ENCODE measurements at regions of chr12 and their contacts with region 1.

Region 1: DNA sequence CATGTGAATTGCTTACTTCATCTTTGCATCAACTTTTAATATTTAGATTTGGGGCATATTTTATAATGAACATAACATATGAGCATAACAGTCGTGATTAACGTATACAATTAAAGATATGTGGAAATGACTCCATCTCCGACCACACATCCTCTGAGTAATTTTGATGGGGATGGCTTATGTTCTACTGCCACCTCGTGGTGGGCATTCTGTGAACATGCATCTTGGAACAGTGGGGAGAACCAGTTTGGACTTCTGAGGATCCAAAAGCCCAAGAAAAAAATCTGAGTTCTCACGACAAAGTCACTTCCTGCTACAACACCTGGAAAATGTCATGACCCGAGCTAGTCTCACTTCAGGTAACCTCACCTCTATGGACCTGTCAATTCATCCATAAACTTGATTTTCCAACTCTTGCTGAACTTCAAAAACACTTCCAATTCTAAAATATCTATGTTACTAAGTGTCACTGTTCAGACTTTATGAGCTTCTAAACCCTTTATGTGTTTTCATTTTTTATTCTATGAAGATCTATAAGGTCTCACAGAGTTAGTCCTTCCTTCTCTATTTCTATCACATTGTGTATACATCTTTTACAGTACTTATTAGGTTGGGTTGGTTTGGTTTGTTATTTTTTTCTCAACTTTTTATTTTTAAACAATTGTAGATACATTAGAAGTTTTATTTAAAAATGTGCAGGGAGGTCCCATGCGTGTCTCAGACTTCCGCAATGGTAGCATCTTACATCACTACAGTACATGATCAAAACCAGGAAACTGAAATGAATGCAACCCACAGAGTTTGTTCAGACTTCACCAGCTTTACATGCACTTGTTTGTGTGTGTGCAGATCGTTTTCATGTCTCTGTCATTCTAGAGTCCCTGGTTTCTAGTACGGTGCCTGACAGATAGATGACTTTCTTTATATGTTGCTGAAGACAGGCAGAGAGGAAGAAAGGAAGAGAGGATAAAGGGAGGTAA is 38.2 kb upstream of the STAB2 start:
- DNase-seq: peak; percentile 85
- ATAC-seq: peak; percentile 82
- H3K4me3 Mint-ChIP-seq: no peak overlapping the region
- H3K27ac Mint-ChIP-seq: no peak overlapping the region
- H3K4me1 Mint-ChIP-seq: peaks cover 5% of the 10 kb centered on the region
- H3K27me3 Mint-ChIP-seq: peaks cover 14% of the 10 kb centered on the region
- CTCF ChIP-seq: peak; percentile 97

Region 2: GRCh38 chr12:102883204-102883799 is 665.6 kb before region 1 on chr12:
- CTCF ChIA-PET with region 1: interaction called, 48 read pairs
- POLR2A ChIA-PET with region 1: interaction called, 3 read pairs
- intact Hi-C with region 1: loop called (anchors 2 kb)
- DNase-seq: peak; percentile 59
- ATAC-seq: peak; percentile 49
- H3K4me3 Mint-ChIP-seq: no peak overlapping the region
- H3K27ac Mint-ChIP-seq: no peak overlapping the region
- H3K4me1 Mint-ChIP-seq: no peaks in the 10 kb centered on the region
- H3K27me3 Mint-ChIP-seq: peaks cover 8% of the 10 kb centered on the region
- CTCF ChIP-seq: peak; percentile 78

Region 3: DNA sequence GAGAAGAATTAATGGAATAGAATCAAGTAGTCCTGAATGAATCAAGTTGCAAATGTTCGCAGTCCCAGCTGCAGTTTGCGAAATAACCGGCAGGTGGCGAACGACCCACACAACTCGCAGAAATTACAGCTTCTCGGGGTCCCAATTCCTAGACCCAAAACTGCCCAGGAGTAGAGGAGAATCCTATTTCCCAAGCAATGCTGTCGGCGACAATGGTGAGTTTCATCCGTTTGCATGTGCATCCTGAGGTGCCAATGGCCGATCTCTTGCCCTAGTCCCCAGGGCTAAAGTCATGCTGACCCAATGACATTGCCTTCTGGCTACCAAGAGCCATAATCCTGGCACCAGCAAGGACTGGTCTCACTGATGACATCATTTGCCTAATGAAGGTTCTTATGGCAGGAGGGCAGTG is 600.0 kb before region 1 on chr12:
- CTCF ChIA-PET with region 1: interaction called, 71 read pairs
- POLR2A ChIA-PET with region 1: no interaction called
- intact Hi-C with region 1: loop called (anchors 2 kb)
- DNase-seq: peak; percentile 74
- ATAC-seq: no peak
- H3K4me3 Mint-ChIP-seq: no peak overlapping the region
- H3K27ac Mint-ChIP-seq: no peak overlapping the region
- H3K4me1 Mint-ChIP-seq: peaks cover 9% of the 10 kb centered on the region
- H3K27me3 Mint-ChIP-seq: peaks cover 53% of the 10 kb centered on the region
- CTCF ChIP-seq: peak; percentile 96

Region 4: GRCh38 chr12:103326190-103326589 is 222.7 kb before region 1 on chr12:
- CTCF ChIA-PET with region 1: interaction called, 11 read pairs
- POLR2A ChIA-PET with region 1: no interaction called
- intact Hi-C with region 1: loop called (anchors 10 kb)
- DNase-seq: no peak
- ATAC-seq: no peak
- H3K4me3 Mint-ChIP-seq: no peak overlapping the region
- H3K27ac Mint-ChIP-seq: no peak overlapping the region
- H3K4me1 Mint-ChIP-seq: no peaks in the 10 kb centered on the region
- H3K27me3 Mint-ChIP-seq: no peaks in the 10 kb centered on the region
- CTCF ChIP-seq: peak; percentile 46

Region 5: DNA sequence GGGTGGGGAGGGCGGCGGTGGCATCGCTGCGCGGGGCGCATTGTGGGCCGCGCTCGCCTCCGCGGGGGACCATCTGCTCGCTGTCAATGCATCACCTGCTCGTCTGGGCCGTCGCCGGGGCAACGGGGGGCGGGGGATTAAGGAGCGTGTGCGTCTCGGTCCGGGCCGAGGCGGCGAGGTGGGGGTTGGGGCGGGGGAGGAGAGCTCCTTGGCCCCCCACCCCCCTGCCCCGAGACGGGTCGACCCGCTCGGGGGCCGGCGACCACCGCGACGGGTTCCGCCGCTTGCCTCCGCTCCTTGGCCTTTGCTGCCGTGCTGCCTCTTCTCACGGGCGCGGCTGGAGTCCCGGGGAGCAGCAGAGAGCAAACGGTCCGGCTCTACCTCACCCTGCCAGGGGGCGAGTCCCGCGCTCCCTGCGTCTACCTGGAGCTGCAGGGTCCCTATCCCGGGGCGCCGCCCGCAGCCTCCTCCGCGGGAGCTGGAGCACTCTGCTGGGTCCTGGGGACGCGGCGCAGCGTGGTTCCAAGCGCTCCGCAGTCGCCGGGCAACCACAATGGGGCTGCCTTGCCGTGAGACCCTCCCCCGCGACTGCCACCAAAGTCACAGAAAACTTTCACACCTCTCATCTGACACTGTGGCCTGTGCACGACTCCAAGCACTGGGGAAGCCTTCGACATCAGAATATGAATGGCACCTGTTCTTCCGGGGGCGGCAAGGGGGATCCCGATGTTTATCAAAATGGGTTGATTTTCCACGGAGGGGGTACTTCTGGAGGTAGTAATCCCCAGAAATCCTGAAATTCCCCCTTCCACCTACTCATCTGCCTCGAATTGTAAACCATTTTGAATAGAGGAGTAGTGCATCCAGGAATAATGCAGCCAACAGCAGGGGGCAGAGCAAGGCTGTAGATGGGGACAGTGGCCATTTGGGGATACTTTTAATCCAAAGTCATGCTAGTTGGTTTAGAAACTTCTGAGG is 53.1 kb before region 1 on chr12 and contains the start of gene C12orf42:
- CTCF ChIA-PET with region 1: interaction called, 81 read pairs
- POLR2A ChIA-PET with region 1: no interaction called
- intact Hi-C with region 1: loop called (anchors 2 kb)
- DNase-seq: peak; percentile 82
- ATAC-seq: peak; percentile 72
- H3K4me3 Mint-ChIP-seq: peak within 1 kb of the TSS; percentile 64
- H3K27ac Mint-ChIP-seq: peak within 1 kb of the TSS; percentile 37
- H3K4me1 Mint-ChIP-seq: peaks cover 34% of the 10 kb centered on the region
- H3K27me3 Mint-ChIP-seq: peaks cover 13% of the 10 kb centered on the region
- CTCF ChIP-seq: peak; percentile 66
- total RNA-seq, gene C12orf42: 0.49 to 1.4 TPM

Region 6: GRCh38 chr12:103503977-103504376 is 44.9 kb before region 1 on chr12:
- CTCF ChIA-PET with region 1: interaction called, 11 read pairs
- POLR2A ChIA-PET with region 1: no interaction called
- intact Hi-C with region 1: no loop called
- DNase-seq: peak; percentile 70
- ATAC-seq: no peak
- H3K4me3 Mint-ChIP-seq: no peak overlapping the region
- H3K27ac Mint-ChIP-seq: no peak overlapping the region
- H3K4me1 Mint-ChIP-seq: peaks cover 39% of the 10 kb centered on the region
- H3K27me3 Mint-ChIP-seq: peaks cover 12% of the 10 kb centered on the region
- CTCF ChIP-seq: peak; percentile 70

Region 7: GRCh38 chr12:103538397-103538796 is 10.5 kb before region 1 on chr12:
- CTCF ChIA-PET with region 1: interaction called, 18 read pairs
- POLR2A ChIA-PET with region 1: interaction called, 3 read pairs
- intact Hi-C with region 1: no loop called
- DNase-seq: no peak
- ATAC-seq: peak; percentile 53
- H3K4me3 Mint-ChIP-seq: no peak overlapping the region
- H3K27ac Mint-ChIP-seq: no peak overlapping the region
- H3K4me1 Mint-ChIP-seq: peaks cover 6% of the 10 kb centered on the region
- H3K27me3 Mint-ChIP-seq: peaks cover 3% of the 10 kb centered on the region
- CTCF ChIP-seq: no peak

Region 8: DNA sequence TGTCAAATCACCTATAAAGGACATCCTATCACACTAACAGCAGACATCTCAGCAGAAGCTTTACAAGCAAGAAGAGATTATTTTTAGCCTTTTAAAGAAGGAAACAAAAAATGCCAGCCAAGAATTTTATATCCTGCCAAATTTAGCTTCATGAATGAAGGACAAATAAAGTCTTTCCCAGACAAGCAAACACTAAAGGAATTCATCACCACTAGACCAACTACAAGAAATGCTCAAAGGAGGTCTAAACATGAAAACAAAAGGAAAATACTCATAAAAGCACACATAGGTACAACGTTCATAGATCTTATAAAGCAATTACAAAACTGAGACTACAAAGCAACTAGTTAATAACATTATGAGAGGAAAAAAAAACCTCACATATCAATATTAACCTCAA is 17.5 kb after region 1 on chr12:
- CTCF ChIA-PET with region 1: no interaction called
- POLR2A ChIA-PET with region 1: no interaction called
- intact Hi-C with region 1: no loop called
- DNase-seq: no peak
- ATAC-seq: no peak
- H3K4me3 Mint-ChIP-seq: no peak overlapping the region
- H3K27ac Mint-ChIP-seq: no peak overlapping the region
- H3K4me1 Mint-ChIP-seq: no peaks in the 10 kb centered on the region
- H3K27me3 Mint-ChIP-seq: peaks cover 38% of the 10 kb centered on the region
- CTCF ChIP-seq: no peak

Measured in activated CD8-positive, alpha-beta T cell treated with anti-CD3 and anti-CD28 coated beads for 36 hours (primary cell).